GM13976 (cell line): ENCODE measurements at regions of chr22 and their contacts with region 1.

Region 1: GRCh38 chr22:41976401-41976901 is 7.2 kb downstream of the SEPTIN3 start:
- DNase-seq: peak; percentile 59
- CTCF ChIP-seq: no peak

Region 2: DNA sequence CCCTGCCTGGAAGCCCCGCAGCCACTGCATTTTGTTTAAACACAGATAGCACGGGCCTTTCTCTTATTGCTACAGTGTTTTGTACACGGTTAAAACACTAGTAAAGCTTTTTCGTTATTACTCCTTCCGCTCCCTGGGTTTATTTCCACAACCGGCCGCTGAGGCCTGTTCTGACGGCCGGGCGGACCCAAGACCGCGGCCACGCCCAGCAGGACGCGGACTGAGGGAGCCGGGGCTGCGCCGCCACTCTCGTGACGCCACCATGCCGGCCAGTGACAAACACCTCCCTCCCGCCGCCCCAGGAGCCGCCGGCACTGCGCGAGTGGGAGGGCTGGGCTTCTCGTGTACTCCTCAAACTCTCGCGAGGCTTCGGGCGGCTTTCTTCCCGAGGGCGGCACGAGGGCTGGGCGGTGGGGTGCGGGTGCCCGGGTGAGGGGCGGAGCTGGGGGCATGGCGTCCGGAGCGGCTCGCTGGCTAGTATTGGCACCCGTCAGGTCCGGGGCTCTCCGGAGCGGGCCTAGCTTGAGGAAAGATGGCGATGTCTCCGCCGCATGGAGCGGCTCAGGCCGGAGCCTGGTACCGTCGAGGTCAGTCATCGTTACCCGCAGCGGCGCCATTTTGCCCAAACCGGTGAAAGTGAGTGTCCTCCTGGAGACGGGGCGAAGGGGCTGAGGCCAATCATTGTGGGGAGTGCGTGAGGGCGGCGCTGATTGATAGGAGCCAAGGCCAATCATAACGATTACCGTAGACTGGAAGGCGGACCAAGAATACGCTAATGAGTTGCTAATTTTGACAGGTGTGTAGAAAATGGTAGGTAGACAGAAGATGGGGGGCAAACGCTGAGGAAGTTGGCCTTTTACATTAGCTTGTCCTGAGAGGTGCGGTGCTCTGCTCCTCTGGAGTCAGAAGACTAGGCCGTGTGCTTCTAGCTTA is 103.1 kb after region 1 on chr22 and contains the start of gene SMDT1:
- in situ Hi-C with region 1: loop called (anchors 10 kb)
- DNase-seq: peak; percentile 98
- CTCF ChIP-seq: no peak